Caco-2 (cell line): ENCODE measurements at regions of chr19 and their contacts with region 1.

Region 1: DNA sequence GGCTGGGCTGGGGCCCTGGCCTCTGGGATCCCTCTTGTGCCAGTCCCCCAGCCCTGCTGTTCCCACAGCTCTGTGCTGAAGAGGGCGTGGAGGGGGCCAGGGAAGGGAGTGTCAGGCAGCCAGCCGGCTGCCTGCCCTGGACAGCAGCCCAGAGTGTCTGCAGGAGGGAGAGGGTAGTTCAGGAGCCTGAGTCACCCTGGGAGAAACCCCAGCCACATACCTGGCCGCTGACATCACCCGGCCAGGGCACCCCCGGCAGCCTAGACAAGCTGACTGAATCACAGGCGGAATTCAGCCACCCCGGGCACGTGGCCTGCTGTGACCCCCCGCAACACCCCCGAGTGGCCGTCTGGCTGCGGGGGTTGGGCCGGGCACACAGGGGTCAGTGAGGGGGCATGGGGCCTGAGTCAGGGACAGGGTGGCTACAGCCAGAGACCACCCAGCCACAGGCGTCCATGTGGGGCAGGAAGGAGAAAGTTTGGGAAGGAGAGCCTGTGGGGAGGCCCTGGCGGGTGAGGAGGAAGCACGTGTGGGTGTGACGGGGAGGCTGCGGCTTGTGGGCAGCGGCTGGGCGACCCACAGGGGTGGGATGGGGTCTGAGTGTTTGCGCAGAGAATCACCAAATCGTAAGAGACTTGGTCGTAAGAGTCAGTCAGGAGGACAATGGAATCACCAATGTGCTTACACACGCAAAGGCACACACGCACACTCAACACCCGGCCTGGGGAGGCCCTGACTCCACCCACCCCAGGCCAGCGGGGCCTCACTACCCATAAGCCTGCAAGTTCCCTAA is 11.9 kb upstream of the FOSB start:
- DNase-seq: peak; percentile 95
- H3K4me3 ChIP-seq: no peak overlapping the region
- H3K4me3 Mint-ChIP-seq: peak overlapping the region; percentile 46
- H3K27ac Mint-ChIP-seq: peak overlapping the region; percentile 96
- H3K4me1 ChIP-seq: peaks cover 26% of the 10 kb centered on the region
- H3K4me1 Mint-ChIP-seq: peaks cover 30% of the 10 kb centered on the region
- H3K27me3 ChIP-seq: no peaks in the 10 kb centered on the region
- H3K27me3 Mint-ChIP-seq: no peaks in the 10 kb centered on the region
- CTCF ChIP-seq: no peak

Region 2: GRCh38 chr19:45478454-45479238 is 22.7 kb after region 1 on chr19:
- CTCF ChIA-PET with region 1: interaction called, 10 read pairs
- POLR2A ChIA-PET with region 1: no interaction called
- intact Hi-C with region 1: loop called (anchors 1 kb)
- DNase-seq: peak; percentile 92 to 94
- H3K4me3 ChIP-seq: peak overlapping the region; percentile 53
- H3K4me3 Mint-ChIP-seq: peak overlapping the region; percentile 53
- H3K27ac Mint-ChIP-seq: peak overlapping the region; percentile 99
- H3K4me1 ChIP-seq: 0 out of 2 replicates have a peak, but pooled peaks cover 4% of the 10 kb centered on the region
- H3K4me1 Mint-ChIP-seq: peaks cover 7% of the 10 kb centered on the region
- H3K27me3 ChIP-seq: no peaks in the 10 kb centered on the region
- H3K27me3 Mint-ChIP-seq: peaks cover 2% of the 10 kb centered on the region
- CTCF ChIP-seq: peak; percentile 94 to 96